Natural killer cell (primary cell): ENCODE measurements at regions of chrX and their contacts with region 1.

Region 1: DNA sequence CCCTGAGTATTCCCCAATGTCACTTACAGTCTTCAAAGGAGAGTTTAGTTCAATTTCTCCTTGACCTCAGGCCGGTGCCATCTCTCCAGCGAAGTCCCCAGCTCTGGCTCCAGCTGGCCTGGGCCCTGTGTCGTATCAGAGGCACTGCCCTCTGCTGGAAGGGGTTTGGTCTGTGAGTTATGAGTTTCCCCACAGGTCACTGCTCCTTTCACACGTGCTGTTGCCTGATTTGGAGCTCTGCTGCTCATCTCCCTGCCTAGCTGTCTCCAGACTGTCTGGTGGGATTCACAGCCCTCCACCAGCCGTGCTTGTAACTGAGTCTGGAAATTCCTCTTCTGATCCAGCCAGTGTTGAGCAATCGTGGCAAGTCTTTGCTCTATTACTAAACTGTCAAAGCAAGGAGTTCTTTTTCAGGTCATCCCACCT is at the start of gene RAP2C:
- DNase-seq: peak; percentile 48 to 78
- ATAC-seq: peak; percentile 42 to 51 (median 43)
- H3K4me3 ChIP-seq: peak within 1 kb of the TSS; percentile 95
- H3K4me3 Mint-ChIP-seq: peak within 1 kb of the TSS; percentile 92
- H3K27ac ChIP-seq: peak within 1 kb of the TSS; percentile 99
- H3K27ac Mint-ChIP-seq: peak within 1 kb of the TSS; percentile 94 to 96
- H3K4me1 ChIP-seq: peaks cover 10% of the 10 kb centered on the region
- H3K4me1 Mint-ChIP-seq: peaks cover 23 to 28% of the 10 kb centered on the region in 2 donors
- H3K27me3 ChIP-seq: no peaks in the 10 kb centered on the region
- H3K27me3 Mint-ChIP-seq: peaks cover 0 to 22% of the 10 kb centered on the region in 2 donors
- CTCF ChIP-seq: peak; percentile 27
- total RNA-seq, gene RAP2C: 58.1 to 66.4 (median 60.0) TPM

Region 2: DNA sequence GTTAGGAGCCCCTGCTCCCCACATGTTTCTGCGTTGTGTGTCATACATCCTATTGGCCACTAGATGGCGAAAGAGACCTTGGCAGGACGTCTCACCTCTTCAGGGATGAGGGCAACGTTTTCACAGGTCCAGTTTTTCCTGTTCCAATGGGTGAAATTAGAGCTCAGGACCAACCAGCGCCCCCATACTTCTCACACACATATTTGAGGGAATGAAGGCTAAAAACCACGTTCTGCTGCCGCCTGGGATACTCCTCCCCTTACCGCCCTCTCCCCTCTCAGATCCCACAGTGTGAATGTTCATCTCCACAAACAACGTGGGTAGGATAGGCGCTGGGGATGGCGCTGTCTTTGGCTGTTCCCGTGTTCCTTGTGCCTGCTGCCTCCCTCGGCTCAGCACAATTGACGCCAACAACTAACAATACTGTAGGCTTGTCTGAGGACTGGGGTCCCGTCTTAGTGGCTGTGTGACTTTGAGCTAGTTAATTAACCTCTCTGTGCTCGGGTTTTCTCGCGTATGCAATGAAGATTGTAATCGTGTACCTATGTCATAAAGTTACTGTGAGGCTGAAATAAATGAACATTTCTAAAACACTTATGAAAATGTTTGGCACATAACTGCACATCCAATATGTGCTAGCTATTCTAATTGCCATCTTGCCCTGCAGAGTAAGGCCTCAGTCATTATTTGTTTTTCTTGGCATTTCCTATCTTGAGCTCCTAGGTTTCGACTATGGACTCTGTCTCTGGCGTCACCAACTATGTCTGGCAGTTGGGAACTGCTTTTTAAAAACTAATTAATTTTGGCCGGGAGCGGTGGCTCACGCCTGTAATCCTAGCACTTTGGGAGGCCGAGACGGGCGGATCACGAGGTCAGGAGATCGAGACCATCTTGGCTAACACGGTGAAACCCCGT is 377.6 kb before region 1 on chrX:
- intact Hi-C with region 1: loop called (anchors 5 kb)
- DNase-seq: peak in 1 of 2 donors; percentile 74
- ATAC-seq: peak in 2 of 3 donors; percentile 76 to 92
- H3K4me3 ChIP-seq: no peak overlapping the region
- H3K4me3 Mint-ChIP-seq: no peak overlapping the region
- H3K27ac ChIP-seq: no peak overlapping the region
- H3K27ac Mint-ChIP-seq: no peak overlapping the region
- H3K4me1 ChIP-seq: peaks cover 7% of the 10 kb centered on the region
- H3K4me1 Mint-ChIP-seq: peaks cover 0 to 7% of the 10 kb centered on the region in 2 donors
- H3K27me3 ChIP-seq: no peaks in the 10 kb centered on the region
- H3K27me3 Mint-ChIP-seq: peaks cover 0 to 33% of the 10 kb centered on the region in 2 donors
- CTCF ChIP-seq: peak; percentile 69

Region 3: GRCh38 chrX:131894987-131895386 is 324.4 kb before region 1 on chrX:
- intact Hi-C with region 1: loop called (anchors 2 kb)
- DNase-seq: no peak
- ATAC-seq: no peak
- H3K4me3 ChIP-seq: no peak overlapping the region
- H3K4me3 Mint-ChIP-seq: no peak overlapping the region
- H3K27ac ChIP-seq: no peak overlapping the region
- H3K27ac Mint-ChIP-seq: no peak overlapping the region
- H3K4me1 ChIP-seq: no peaks in the 10 kb centered on the region
- H3K4me1 Mint-ChIP-seq: no peaks in the 10 kb centered on the region
- H3K27me3 ChIP-seq: no peaks in the 10 kb centered on the region
- H3K27me3 Mint-ChIP-seq: peaks cover 4 to 27% of the 10 kb centered on the region in 2 donors
- CTCF ChIP-seq: no peak

Region 4: DNA sequence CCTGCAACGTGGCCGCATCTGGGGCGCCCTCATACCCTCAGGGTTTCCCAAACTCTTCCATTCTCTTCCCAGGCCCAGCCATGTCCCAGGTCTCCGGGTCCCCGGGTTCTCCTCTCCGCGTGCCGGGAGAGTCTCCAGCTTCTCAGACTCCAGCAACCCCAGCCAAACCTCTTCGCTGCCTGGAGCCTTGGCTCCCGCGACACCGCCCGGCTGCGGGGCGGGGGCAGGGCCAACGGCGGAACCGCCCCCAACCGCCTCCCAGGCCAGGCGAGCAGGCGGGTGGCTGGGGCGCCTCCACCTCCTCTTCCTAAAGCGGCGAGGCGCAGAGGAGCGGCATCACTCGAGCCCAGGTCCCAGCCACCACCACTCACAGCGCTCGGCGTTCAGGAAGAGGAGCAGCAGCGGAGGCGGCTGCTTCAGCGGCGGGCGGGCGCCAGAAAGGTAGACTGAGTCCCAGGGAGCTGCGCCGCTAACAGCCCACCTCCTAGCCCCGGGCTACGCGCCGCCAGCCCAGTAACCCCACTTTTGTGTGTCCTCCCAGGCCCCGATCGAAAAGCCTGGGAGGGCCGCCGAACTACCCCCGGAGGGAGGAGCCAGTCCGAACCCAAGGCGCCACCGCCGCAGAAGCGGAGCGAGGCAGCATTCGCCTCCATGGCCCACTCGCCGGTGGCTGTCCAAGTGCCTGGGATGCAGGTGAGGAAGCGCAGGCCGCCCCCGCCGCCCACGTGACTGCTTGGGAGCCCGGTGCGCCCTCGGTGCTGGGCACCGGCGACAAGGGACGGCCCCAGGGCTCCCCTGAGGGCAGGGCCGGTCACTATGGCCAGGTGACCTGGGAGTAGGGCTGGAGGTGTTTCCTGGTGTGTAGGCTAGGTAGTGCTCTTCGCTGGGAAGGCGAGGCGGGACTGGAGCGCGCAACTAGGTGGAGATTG is 196.1 kb before region 1 on chrX and contains the start of gene STK26:
- intact Hi-C with region 1: loop called (anchors 5 kb)
- DNase-seq: peak; percentile 64 to 86
- ATAC-seq: peak; percentile 78 to 93 (median 82)
- H3K4me3 ChIP-seq: peak within 1 kb of the TSS; percentile 94
- H3K4me3 Mint-ChIP-seq: peak within 1 kb of the TSS; percentile 89
- H3K27ac ChIP-seq: peak within 1 kb of the TSS; percentile 90
- H3K27ac Mint-ChIP-seq: peak within 1 kb of the TSS; percentile 81 to 91
- H3K4me1 ChIP-seq: peaks cover 17% of the 10 kb centered on the region
- H3K4me1 Mint-ChIP-seq: peaks cover 32 to 37% of the 10 kb centered on the region in 2 donors
- H3K27me3 ChIP-seq: no peaks in the 10 kb centered on the region
- H3K27me3 Mint-ChIP-seq: peaks cover 0 to 10% of the 10 kb centered on the region in 2 donors
- CTCF ChIP-seq: no peak
- total RNA-seq, gene STK26: 62.5 to 81.0 (median 66.5) TPM

Region 5: GRCh38 chrX:132092439-132093065 is 126.8 kb before region 1 on chrX:
- intact Hi-C with region 1: loop called (anchors 2 kb)
- DNase-seq: peak; percentile 16 to 75
- ATAC-seq: peak; percentile 67 to 88 (median 84)
- H3K4me3 ChIP-seq: no peak overlapping the region
- H3K4me3 Mint-ChIP-seq: no peak overlapping the region
- H3K27ac ChIP-seq: no peak overlapping the region
- H3K27ac Mint-ChIP-seq: no peak overlapping the region
- H3K4me1 ChIP-seq: peaks cover 3% of the 10 kb centered on the region
- H3K4me1 Mint-ChIP-seq: peaks cover 6 to 13% of the 10 kb centered on the region in 2 donors
- H3K27me3 ChIP-seq: no peaks in the 10 kb centered on the region
- H3K27me3 Mint-ChIP-seq: peaks cover 0 to 30% of the 10 kb centered on the region in 2 donors
- CTCF ChIP-seq: peak; percentile 49

Region 6: GRCh38 chrX:132144061-132144460 is 75.3 kb before region 1 on chrX:
- intact Hi-C with region 1: no loop called
- DNase-seq: no peak
- ATAC-seq: no peak
- H3K4me3 ChIP-seq: no peak overlapping the region
- H3K4me3 Mint-ChIP-seq: no peak overlapping the region
- H3K27ac ChIP-seq: no peak overlapping the region
- H3K27ac Mint-ChIP-seq: no peak overlapping the region
- H3K4me1 ChIP-seq: no peaks in the 10 kb centered on the region
- H3K4me1 Mint-ChIP-seq: no peaks in the 10 kb centered on the region
- H3K27me3 ChIP-seq: no peaks in the 10 kb centered on the region
- H3K27me3 Mint-ChIP-seq: peaks cover 0 to 51% of the 10 kb centered on the region in 2 donors
- CTCF ChIP-seq: no peak

Region 7: DNA sequence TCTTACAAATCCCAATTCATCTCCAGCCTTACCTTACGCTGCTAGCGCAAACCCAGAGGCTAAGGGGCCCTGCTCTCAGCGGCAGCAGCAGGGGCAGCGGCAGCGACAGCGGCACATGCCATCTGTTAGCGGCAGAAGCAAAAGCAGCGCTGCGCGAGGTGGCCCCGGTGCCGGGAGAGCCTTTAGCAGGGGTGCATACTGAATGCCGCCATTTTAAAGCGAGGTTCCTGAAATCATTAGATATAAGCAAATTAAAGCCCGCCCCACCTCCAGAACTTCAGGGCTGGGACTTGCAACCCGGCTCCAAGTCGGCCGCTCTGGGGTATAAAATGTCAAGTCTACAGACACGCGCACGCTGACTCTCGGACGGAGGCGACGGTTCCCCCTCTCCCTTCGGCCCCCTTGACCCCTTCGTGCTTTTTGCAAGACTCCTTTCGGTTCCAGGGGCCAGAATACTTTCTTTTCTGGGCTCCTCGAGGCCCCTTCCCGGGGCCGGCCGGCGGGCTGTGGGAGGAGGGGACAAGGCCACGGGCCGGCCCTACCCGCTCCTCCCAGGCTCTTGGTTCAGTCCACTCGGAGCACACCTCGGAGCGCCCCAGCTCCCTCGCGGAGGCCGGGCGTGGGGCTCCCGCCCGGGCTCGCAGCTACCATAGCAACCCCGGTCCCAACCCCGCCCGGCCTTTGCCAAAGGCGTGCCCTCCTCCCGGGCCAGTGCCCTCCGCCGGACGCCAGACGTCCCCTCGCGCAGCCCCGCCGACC is 269.6 kb after region 1 on chrX and contains the start of gene MBNL3:
- intact Hi-C with region 1: loop called (anchors 2 kb)
- DNase-seq: peak; percentile 43 to 83
- ATAC-seq: peak; percentile 62 to 82 (median 68)
- H3K4me3 ChIP-seq: peak within 1 kb of the TSS; percentile 68
- H3K4me3 Mint-ChIP-seq: peak within 1 kb of the TSS; percentile 97
- H3K27ac ChIP-seq: peak within 1 kb of the TSS; percentile 90
- H3K27ac Mint-ChIP-seq: peak within 1 kb of the TSS; percentile 84 to 89
- H3K4me1 ChIP-seq: peaks cover 6% of the 10 kb centered on the region
- H3K4me1 Mint-ChIP-seq: peaks cover 19 to 44% of the 10 kb centered on the region in 2 donors
- H3K27me3 ChIP-seq: no peaks in the 10 kb centered on the region
- H3K27me3 Mint-ChIP-seq: peaks cover 0 to 22% of the 10 kb centered on the region in 2 donors
- CTCF ChIP-seq: no peak
- total RNA-seq, gene MBNL3: 55.3 to 64.3 (median 59.3) TPM

Region 8: DNA sequence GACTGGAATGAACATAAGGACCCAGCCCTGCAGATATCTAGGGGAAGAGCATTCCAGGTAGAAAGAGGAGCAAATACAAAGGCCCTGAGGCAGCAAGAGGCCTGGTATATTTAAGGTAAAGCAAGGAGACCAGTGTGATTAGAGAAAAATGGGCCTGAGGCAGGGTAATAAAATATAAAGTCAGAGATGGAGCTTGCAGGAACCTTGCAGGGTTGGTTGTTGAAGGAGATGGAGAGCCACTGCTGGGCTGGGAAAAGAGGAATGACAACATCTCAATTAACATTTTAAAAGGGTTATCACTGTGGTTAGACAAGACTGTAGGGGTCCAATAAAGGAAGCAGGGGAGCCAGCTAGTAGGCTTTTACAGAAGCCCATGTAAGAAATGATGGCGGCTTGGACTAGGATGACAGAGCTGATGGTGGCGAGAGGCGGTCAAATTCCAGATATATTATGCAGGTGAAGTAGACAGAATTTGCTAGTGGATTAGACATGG is 475.0 kb after region 1 on chrX:
- intact Hi-C with region 1: no loop called
- DNase-seq: no peak
- ATAC-seq: no peak
- H3K4me3 ChIP-seq: no peak overlapping the region
- H3K4me3 Mint-ChIP-seq: no peak overlapping the region
- H3K27ac ChIP-seq: no peak overlapping the region
- H3K27ac Mint-ChIP-seq: no peak overlapping the region
- H3K4me1 ChIP-seq: peaks cover 13% of the 10 kb centered on the region
- H3K4me1 Mint-ChIP-seq: peaks cover 22 to 23% of the 10 kb centered on the region in 2 donors
- H3K27me3 ChIP-seq: peaks cover 10% of the 10 kb centered on the region
- H3K27me3 Mint-ChIP-seq: peaks cover 35 to 99% of the 10 kb centered on the region in 2 donors
- CTCF ChIP-seq: no peak